ENCODE measurements at regions of chr4 and their contacts with region 1.

Region 1: DNA sequence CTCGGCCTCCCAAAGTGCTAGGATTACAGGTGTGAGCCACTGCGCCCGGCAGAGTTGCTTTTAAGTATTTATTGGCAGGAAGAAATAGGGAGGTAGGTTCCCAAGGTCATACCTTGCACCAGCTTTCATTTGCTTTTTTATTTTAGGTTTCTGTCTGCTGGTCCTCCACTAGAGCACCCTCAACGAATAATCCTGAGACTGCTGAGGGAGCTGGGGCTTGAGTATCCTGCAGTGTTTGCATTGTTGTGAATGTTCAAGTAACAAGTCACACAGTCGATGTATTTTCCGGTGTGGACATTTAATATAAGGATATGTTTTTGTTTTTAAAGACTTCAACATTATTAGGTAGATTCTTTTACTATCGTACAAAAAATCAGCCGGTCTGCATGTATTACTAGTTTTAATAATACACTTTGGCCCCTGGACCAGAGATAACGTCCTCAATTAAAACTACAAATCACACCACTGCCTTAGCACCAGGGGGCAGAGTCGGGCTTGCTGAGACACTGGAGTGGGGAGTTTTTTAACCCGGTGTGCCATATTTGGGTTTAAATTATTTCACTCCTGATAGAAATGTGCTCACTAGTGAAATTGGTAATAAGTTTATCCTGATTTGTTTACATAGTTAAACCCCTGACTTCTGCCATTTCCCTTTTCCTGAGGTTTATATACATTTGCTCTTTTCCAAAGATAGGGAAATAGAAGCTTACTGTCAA is 11.6 kb downstream of the SMIM20 start:
- DNase-seq: peak; percentile 47
- ATAC-seq: peak in 1 of 2 donors; percentile 47

Region 2: GRCh38 chr4:25890571-25891485 is 34.8 kb before region 1 on chr4:
- intact Hi-C with region 1: no loop called
- DNase-seq: no peak
- ATAC-seq: peak in 1 of 2 donors; percentile 23

Region 3: DNA sequence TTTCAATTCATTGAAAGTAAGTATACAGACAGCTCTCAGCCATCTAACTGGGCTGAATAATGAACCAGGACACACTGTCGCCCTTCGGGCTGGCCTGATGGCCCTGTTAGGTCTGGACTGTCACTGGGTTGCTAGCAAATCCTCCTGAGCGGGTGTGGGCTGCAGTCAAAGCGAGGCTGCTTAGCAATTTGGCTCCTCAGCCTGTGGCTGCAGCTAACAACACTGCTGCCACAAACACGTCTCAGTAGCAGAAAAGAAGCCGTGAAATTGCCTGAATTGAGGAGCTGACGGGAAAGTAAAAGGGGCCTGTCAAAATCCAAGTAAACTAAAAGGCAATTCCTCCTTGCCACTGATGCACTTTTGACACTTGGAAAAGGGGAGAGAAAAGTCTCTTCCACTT is 61.2 kb after region 1 on chr4:
- intact Hi-C with region 1: loop called in 1 of 2 experiments (anchors 5 kb)
- DNase-seq: no peak
- ATAC-seq: no peak

Region 4: GRCh38 chr4:26320538-26321325 is 395.1 kb after region 1 on chr4 and contains the start of gene RBPJ:
- intact Hi-C with region 1: loop called in 1 of 2 experiments (anchors 10 kb)
- DNase-seq: peak; percentile 93
- ATAC-seq: peak; percentile 81 to 83
- total RNA-seq, gene RBPJ: 49.6 to 63.5 TPM

Measured in left cardiac atrium (tissue), 4 donors.